CD4-positive, alpha-beta T cell (primary cell): ENCODE measurements at regions of chr18 and their contacts with region 1.

Region 1: GRCh38 chr18:59139371-59140298 is at the start of gene SEC11C:
- DNase-seq: peak; percentile 91 to 98 (median 94)
- ATAC-seq: peak; percentile 87
- H3K4me3 ChIP-seq: peak within 1 kb of the TSS; percentile 78
- H3K4me3 Mint-ChIP-seq: peak within 1 kb of the TSS; percentile 93
- H3K27ac ChIP-seq: peak within 1 kb of the TSS; percentile 94 to 99
- H3K27ac Mint-ChIP-seq: peak within 1 kb of the TSS; percentile 98
- H3K4me1 ChIP-seq: peaks cover 32% of the 10 kb centered on the region
- H3K4me1 Mint-ChIP-seq: peaks cover 38% of the 10 kb centered on the region
- H3K27me3 ChIP-seq: peaks cover 0 to 9% of the 10 kb centered on the region in 2 experiments
- H3K27me3 Mint-ChIP-seq: peaks cover 18% of the 10 kb centered on the region
- CTCF ChIP-seq: no peak
- total RNA-seq, gene SEC11C: 42.0 to 44.1 TPM

Region 2: DNA sequence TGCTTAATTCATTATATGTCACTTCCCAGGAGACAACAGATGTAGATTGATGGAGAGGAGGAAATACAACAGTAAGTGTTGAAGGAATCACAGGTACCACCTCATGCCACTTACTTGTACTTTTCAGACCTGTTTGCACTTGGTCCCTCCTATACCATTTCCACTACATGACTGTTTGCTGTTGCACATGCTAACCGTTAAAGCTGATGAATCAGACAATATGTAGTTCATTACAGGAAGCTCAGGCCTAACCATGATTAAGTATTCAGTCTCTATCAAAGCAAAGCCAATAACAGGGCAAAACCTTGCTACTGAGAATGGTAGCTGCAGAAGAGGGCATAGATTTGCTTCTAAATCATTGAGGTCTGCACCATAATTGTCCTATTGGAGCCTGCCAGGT is 50.1 kb after region 1 on chr18:
- CTCF ChIA-PET with region 1: no interaction called
- POLR2A ChIA-PET with region 1: no interaction called
- intact Hi-C with region 1: loop called in 1 of 2 experiments (anchors 10 kb)
- DNase-seq: no peak
- ATAC-seq: no peak
- H3K4me3 ChIP-seq: no peak overlapping the region
- H3K4me3 Mint-ChIP-seq: no peak overlapping the region
- H3K27ac ChIP-seq: no peak overlapping the region
- H3K27ac Mint-ChIP-seq: no peak overlapping the region
- H3K4me1 ChIP-seq: no peaks in the 10 kb centered on the region
- H3K4me1 Mint-ChIP-seq: no peaks in the 10 kb centered on the region
- H3K27me3 ChIP-seq: no peaks in the 10 kb centered on the region
- H3K27me3 Mint-ChIP-seq: peaks cover 13% of the 10 kb centered on the region
- CTCF ChIP-seq: no peak

Region 3: GRCh38 chr18:59358712-59359575 is 219.3 kb after region 1 on chr18 and contains the start of gene LMAN1:
- CTCF ChIA-PET with region 1: interaction called, 5 read pairs
- POLR2A ChIA-PET with region 1: no interaction called
- intact Hi-C with region 1: loop called (anchors 2 to 10 kb)
- DNase-seq: peak; percentile 76 to 95 (median 88)
- ATAC-seq: peak; percentile 75
- H3K4me3 ChIP-seq: peak within 1 kb of the TSS; percentile 85
- H3K4me3 Mint-ChIP-seq: peak within 1 kb of the TSS; percentile 92
- H3K27ac ChIP-seq: peak within 1 kb of the TSS; percentile 83 to 92
- H3K27ac Mint-ChIP-seq: peak within 1 kb of the TSS; percentile 81
- H3K4me1 ChIP-seq: peaks cover 14% of the 10 kb centered on the region
- H3K4me1 Mint-ChIP-seq: peaks cover 46% of the 10 kb centered on the region
- H3K27me3 ChIP-seq: no peaks in the 10 kb centered on the region
- H3K27me3 Mint-ChIP-seq: no peaks in the 10 kb centered on the region
- CTCF ChIP-seq: no peak
- total RNA-seq, gene LMAN1: 23.9 to 26.1 TPM